BJ (cell line): ENCODE measurements at regions of chr1 and their contacts with region 1.

Region 1: GRCh38 chr1:155250633-155251449 is 4.4 kb downstream of the ENTREP3 start:
- DNase-seq: no peak
- H3K4me3 ChIP-seq: no peak overlapping the region
- H3K27me3 ChIP-seq: no peaks in the 10 kb centered on the region
- CTCF ChIP-seq: peak; percentile 100

Region 2: DNA sequence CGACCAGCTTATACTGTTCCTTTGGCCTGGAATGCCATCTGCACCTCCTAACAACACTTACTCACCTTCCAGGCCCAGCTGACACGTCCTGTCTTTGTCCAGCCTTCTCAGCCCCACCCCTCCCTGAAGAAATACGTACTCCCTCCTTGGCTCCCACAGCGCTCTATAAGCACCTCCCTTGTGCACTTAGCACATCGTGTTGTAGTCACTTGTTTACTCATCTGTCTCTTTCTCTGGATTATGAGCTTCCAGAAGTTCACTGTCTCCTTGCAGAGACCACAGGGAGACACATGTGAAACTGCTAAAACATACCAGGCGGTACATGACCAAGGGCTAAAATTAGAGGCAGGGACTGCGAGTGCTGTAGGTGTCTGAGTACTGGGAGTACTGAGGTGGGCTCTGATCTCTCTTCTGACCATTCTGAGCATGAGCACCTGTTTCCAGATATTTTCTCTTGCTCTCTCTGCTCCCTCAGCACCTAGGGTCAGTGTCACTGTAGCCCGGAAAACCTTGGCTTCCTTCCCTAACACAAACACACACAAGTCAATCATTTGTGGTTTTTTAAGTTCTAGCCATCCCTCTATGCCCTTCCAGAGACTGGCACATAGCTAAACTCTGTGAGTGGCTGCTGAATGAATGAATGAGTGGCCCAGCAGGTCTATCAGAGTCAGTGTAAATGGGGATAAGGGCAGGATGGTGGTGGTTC is 212.1 kb before region 1 on chr1:
- CTCF ChIA-PET with region 1: no interaction called
- POLR2A ChIA-PET with region 1: no interaction called
- DNase-seq: no peak
- H3K4me3 ChIP-seq: no peak overlapping the region
- H3K27me3 ChIP-seq: peaks cover 6% of the 10 kb centered on the region
- CTCF ChIP-seq: no peak

Region 3: GRCh38 chr1:155208541-155209311 is 42.1 kb before region 1 on chr1 and contains the start of gene MTX1:
- CTCF ChIA-PET with region 1: interaction called, 32 read pairs
- POLR2A ChIA-PET with region 1: no interaction called
- DNase-seq: no peak
- H3K4me3 ChIP-seq: peak within 1 kb of the TSS; percentile 57
- H3K27me3 ChIP-seq: no peaks in the 10 kb centered on the region
- CTCF ChIP-seq: no peak
- polyA plus RNA-seq, gene MTX1: 56.5 and 72.7 TPM in 2 replicates

Region 4: DNA sequence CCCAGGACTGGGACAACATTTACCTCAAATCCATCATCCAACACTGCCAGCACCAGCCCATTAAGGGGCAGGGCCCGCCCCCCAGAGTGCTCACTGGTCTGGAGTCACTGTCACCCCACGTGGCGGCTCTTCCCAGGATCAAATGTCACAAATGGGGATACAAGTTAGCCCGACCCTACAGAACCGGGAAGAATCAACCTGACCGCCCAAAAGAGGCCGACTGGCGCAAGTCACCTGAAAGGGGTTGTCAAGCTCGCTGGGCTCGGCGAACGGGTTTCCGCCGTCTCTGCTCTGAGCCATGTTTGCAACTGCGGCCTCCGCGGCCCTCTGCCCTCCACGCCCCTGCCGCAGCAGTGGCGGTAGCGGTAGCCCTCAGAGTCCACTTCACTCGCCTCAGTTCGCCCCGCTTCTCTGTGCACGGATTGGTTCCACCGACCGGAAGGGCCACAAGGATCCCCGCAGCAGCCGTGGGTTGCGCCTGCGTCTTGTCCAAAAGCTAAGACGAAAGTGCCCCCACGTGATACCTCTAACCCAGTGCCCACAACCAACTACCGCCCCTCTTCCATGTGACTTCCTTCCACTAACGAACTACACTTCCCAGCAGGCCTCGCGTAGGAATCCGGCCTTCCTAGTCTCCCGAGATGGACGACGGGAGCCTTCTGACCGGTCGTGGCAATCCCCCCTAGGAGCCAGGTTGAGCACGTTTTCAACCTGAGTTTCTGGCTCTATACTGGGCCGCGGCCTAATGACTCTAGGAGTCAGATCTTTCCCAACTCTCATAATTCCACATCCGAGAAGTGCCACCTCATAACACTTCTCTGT is 11.2 kb after region 1 on chr1 and contains the start of gene SCAMP3:
- CTCF ChIA-PET with region 1: interaction called, 54 read pairs
- POLR2A ChIA-PET with region 1: no interaction called
- DNase-seq: peak; percentile 94
- H3K4me3 ChIP-seq: peak within 1 kb of the TSS; percentile 73
- H3K27me3 ChIP-seq: no peaks in the 10 kb centered on the region
- CTCF ChIP-seq: no peak
- polyA plus RNA-seq, gene SCAMP3: 147 and 193 TPM in 2 replicates

Region 5: DNA sequence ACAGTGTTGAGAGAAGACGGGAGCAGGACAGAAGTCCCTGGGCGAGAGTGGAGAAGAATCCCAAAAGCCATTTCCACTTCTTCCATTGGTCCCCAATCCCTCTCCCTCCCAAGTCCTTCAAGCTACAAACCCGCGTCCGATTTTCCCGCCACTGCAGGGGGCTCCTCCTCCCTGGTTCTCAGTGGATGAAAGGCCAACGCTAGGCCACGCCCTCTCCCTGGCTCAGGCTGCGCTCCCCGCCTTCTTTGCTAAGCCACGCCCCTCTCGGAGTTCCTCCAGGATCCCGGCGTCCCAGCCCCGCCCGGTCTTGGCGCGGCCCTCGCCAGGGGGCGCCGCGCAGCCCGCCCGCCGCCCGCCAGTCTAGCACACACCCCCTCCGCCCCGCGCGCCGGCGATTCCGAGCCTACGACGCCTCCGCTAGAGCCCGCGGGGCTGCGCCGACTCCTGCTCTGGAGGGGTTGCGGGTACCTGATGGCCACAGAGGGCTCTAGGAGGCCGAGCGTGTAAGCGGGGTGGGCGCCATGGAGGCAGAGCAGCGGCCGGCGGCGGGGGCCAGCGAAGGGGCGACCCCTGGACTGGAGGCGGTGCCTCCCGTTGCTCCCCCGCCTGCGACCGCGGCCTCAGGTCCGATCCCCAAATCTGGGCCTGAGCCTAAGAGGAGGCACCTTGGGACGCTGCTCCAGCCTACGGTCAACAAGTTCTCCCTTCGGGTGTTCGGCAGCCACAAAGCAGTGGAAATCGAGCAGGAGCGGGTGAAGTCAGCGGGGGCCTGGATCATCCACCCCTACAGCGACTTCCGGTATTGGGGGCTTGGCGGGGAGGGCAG is 26.4 kb after region 1 on chr1 and contains the start of gene HCN3:
- CTCF ChIA-PET with region 1: interaction called, 20 read pairs
- POLR2A ChIA-PET with region 1: interaction called, 3 read pairs
- DNase-seq: peak; percentile 60
- H3K4me3 ChIP-seq: peak within 1 kb of the TSS; percentile 86
- H3K27me3 ChIP-seq: no peaks in the 10 kb centered on the region
- CTCF ChIP-seq: peak; percentile 42
- polyA plus RNA-seq, gene HCN3: 1.8 and 4.0 TPM in 2 replicates

Region 6: GRCh38 chr1:155308493-155309422 is 57.9 kb after region 1 on chr1 and contains the start of gene FDPS:
- CTCF ChIA-PET with region 1: interaction called, 19 read pairs
- POLR2A ChIA-PET with region 1: no interaction called
- DNase-seq: peak; percentile 96
- H3K4me3 ChIP-seq: peak within 1 kb of the TSS; percentile 86
- H3K27me3 ChIP-seq: no peaks in the 10 kb centered on the region
- CTCF ChIP-seq: no peak
- polyA plus RNA-seq, gene FDPS: 126 and 131 TPM in 2 replicates

Region 7: GRCh38 chr1:155591770-155592169 is 340.9 kb after region 1 on chr1:
- CTCF ChIA-PET with region 1: interaction called, 39 read pairs
- POLR2A ChIA-PET with region 1: no interaction called
- DNase-seq: no peak
- H3K4me3 ChIP-seq: no peak overlapping the region
- H3K27me3 ChIP-seq: no peaks in the 10 kb centered on the region
- CTCF ChIP-seq: peak; percentile 48

Region 8: GRCh38 chr1:155648551-155649147 is 397.8 kb after region 1 on chr1:
- CTCF ChIA-PET with region 1: interaction called, 22 read pairs
- POLR2A ChIA-PET with region 1: no interaction called
- DNase-seq: peak; percentile 49
- H3K4me3 ChIP-seq: peak overlapping the region; percentile 33
- H3K27me3 ChIP-seq: no peaks in the 10 kb centered on the region
- CTCF ChIP-seq: peak; percentile 65